Caco-2 (cell line): ENCODE measurements at regions of chr6 and their contacts with region 1.

Region 1: GRCh38 chr6:47787620-47788497 is 6.0 kb downstream of the OPN5 start:
- DNase-seq: peak; percentile 56 to 67
- H3K4me3 ChIP-seq: no peak overlapping the region
- H3K4me3 Mint-ChIP-seq: no peak overlapping the region
- H3K27ac Mint-ChIP-seq: no peak overlapping the region
- H3K4me1 ChIP-seq: no peaks in the 10 kb centered on the region
- H3K4me1 Mint-ChIP-seq: no peaks in the 10 kb centered on the region
- H3K27me3 ChIP-seq: no peaks in the 10 kb centered on the region
- H3K27me3 Mint-ChIP-seq: peaks cover 11% of the 10 kb centered on the region
- CTCF ChIP-seq: peak; percentile 88 to 90

Region 2: GRCh38 chr6:47722194-47722593 is 65.7 kb before region 1 on chr6:
- CTCF ChIA-PET with region 1: no interaction called
- POLR2A ChIA-PET with region 1: no interaction called
- intact Hi-C with region 1: no loop called
- DNase-seq: no peak
- H3K4me3 ChIP-seq: no peak overlapping the region
- H3K4me3 Mint-ChIP-seq: no peak overlapping the region
- H3K27ac Mint-ChIP-seq: no peak overlapping the region
- H3K4me1 ChIP-seq: no peaks in the 10 kb centered on the region
- H3K4me1 Mint-ChIP-seq: no peaks in the 10 kb centered on the region
- H3K27me3 ChIP-seq: no peaks in the 10 kb centered on the region
- H3K27me3 Mint-ChIP-seq: no peaks in the 10 kb centered on the region
- CTCF ChIP-seq: no peak

Region 3: GRCh38 chr6:48080227-48081009 is 292.6 kb after region 1 on chr6:
- CTCF ChIA-PET with region 1: no interaction called
- POLR2A ChIA-PET with region 1: no interaction called
- intact Hi-C with region 1: loop called (anchors 5 kb)
- DNase-seq: no peak
- H3K4me3 ChIP-seq: no peak overlapping the region
- H3K4me3 Mint-ChIP-seq: no peak overlapping the region
- H3K27ac Mint-ChIP-seq: no peak overlapping the region
- H3K4me1 ChIP-seq: no peaks in the 10 kb centered on the region
- H3K4me1 Mint-ChIP-seq: no peaks in the 10 kb centered on the region
- H3K27me3 ChIP-seq: no peaks in the 10 kb centered on the region
- H3K27me3 Mint-ChIP-seq: peaks cover 2% of the 10 kb centered on the region
- CTCF ChIP-seq: no peak

Region 4: GRCh38 chr6:48765352-48765961 is 977.6 kb after region 1 on chr6:
- CTCF ChIA-PET with region 1: interaction called, 12 read pairs
- POLR2A ChIA-PET with region 1: no interaction called
- intact Hi-C with region 1: loop called (anchors 1 kb)
- DNase-seq: peak; percentile 39 to 42
- H3K4me3 ChIP-seq: no peak overlapping the region
- H3K4me3 Mint-ChIP-seq: no peak overlapping the region
- H3K27ac Mint-ChIP-seq: no peak overlapping the region
- H3K4me1 ChIP-seq: peaks cover 4% of the 10 kb centered on the region; the same call in 1 of the 2 replicates
- H3K4me1 Mint-ChIP-seq: no peaks in the 10 kb centered on the region
- H3K27me3 ChIP-seq: no peaks in the 10 kb centered on the region
- H3K27me3 Mint-ChIP-seq: no peaks in the 10 kb centered on the region
- CTCF ChIP-seq: peak; percentile 43 to 50